BJ (cell line): ENCODE measurements at regions of chr5 and their contacts with region 1.

Region 1: GRCh38 chr5:141923448-141924352 is at the start of gene DELE1:
- DNase-seq: peak; percentile 62
- H3K4me3 ChIP-seq: peak within 1 kb of the TSS; percentile 65
- H3K27me3 ChIP-seq: no peaks in the 10 kb centered on the region
- CTCF ChIP-seq: no peak
- polyA plus RNA-seq, gene DELE1: 65.4 and 110 TPM in 2 replicates

Region 2: DNA sequence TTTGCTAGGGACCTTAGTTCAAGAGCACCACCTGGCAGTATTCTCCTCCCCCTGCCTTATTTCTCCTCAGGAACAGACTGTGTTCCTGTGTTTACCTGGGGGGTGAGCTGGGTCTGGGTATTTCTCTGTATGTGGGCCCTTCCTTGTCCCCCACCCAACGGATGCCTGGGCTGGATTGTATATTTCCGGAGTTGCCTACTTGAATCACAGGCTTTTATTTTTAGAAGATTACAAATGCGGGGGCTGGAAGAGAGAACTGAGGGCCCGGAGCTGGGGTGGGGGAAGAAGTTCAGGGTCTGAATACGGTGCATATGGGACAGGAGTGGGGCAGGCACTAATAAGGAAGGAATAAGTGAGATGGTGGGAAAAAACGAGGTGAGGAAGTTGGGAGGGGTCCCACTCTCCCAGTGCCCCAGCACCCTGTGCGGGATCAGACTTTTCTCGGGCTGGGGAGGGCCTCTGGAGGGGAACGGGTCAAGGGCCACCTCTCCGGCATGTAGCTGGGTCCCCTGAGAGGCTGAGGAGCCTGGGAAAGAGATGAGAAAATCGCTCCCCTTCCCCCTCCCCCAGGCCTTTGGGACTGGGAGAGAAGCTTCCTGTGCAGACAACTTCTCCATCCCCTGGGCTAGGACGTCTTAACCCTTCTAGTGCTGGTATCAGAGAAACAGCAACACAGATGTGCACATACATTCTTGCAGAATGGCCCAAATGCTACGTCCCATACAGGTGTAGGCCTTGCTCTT is 87.6 kb before region 1 on chr5:
- CTCF ChIA-PET with region 1: no interaction called
- POLR2A ChIA-PET with region 1: no interaction called
- DNase-seq: no peak
- H3K4me3 ChIP-seq: no peak overlapping the region
- H3K27me3 ChIP-seq: no peaks in the 10 kb centered on the region; the same call in 1 of the 2 replicates
- CTCF ChIP-seq: no peak

Region 3: DNA sequence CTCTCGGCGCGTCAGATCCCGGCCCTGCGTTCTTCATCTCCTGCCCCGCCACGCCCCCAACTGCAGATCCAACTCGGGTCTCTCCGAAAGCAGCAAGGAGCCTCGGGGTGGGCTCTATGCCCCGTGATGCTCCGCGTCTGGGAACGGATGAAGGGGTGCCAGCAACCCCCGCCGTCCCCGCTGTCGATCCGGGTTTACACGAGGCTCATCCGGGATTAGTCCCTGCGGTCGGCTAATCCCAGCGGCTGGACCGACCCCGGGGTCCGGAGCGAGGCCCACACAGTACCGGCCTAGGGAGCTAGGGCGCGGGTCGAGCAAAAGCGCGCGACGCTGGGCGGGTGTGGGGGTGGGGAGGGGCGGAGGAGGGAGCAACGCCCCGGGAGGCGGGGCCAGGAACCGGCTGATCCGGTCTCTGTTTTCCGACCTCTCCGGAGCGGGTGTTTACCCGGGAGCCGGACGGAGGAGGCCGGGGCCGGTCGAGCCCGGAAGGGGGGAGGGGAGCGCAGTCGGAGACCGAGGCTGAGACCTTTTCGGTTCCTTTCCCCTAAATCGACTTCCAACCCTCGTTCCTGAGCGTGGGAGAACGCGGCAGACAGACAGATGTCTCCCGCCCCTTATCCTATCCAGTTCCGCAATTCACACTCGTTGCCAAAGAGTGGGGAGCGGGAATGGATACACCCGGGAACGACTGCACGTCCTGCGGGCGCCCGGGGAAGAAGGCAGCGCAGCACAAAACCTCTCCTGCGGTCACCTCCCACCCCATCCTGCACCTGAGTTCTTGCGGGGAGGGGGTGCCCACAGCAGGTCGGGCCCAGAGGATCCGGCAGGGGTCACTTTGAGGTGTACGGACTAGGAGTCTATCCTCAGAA is 74.1 kb before region 1 on chr5:
- CTCF ChIA-PET with region 1: no interaction called
- POLR2A ChIA-PET with region 1: interaction called, 12 read pairs
- DNase-seq: no peak
- H3K4me3 ChIP-seq: peak overlapping the region; percentile 63
- H3K27me3 ChIP-seq: no peaks in the 10 kb centered on the region; the same call in 1 of the 2 replicates
- CTCF ChIP-seq: no peak